ENCODE measurements at regions of chr3 and their contacts with region 1.

Region 1: GRCh38 chr3:100833483-100833882 is 124.2 kb downstream of the TFG start:
- DNase-seq: peak; percentile 78
- ATAC-seq: peak; percentile 75
- H3K4me3 ChIP-seq: no peak overlapping the region
- H3K27ac ChIP-seq: no peak overlapping the region
- H3K4me1 ChIP-seq: peaks cover 19% of the 10 kb centered on the region
- H3K27me3 ChIP-seq: peaks cover 0 to 12% of the 10 kb centered on the region in 2 experiments; a peak in 2 of 5 replicates
- CTCF ChIP-seq: no peak
- EP300 ChIP-seq: peak in 1 of 2 experiments; percentile 41; a peak in 1 of 4 replicates
- POLR2A ChIP-seq: no peak
- RAD21 ChIP-seq: no peak

Region 2: GRCh38 chr3:100695696-100696095 is 137.8 kb before region 1 on chr3:
- CTCF ChIA-PET with region 1: no interaction called
- POLR2A ChIA-PET with region 1: no interaction called
- in situ Hi-C with region 1: no loop called
- intact Hi-C with region 1: no loop called
- DNase-seq: no peak
- ATAC-seq: no peak
- H3K4me3 ChIP-seq: no peak overlapping the region
- H3K27ac ChIP-seq: no peak overlapping the region
- H3K4me1 ChIP-seq: peaks cover 43% of the 10 kb centered on the region
- H3K27me3 ChIP-seq: peaks cover 0 to 2% of the 10 kb centered on the region in 2 experiments; a peak in 1 of 5 replicates
- CTCF ChIP-seq: no peak
- EP300 ChIP-seq: no peak
- POLR2A ChIP-seq: no peak
- RAD21 ChIP-seq: no peak

Region 3: GRCh38 chr3:101676765-101677435 is 843.4 kb after region 1 on chr3 and contains the start of gene ZBTB11:
- CTCF ChIA-PET with region 1: no interaction called
- POLR2A ChIA-PET with region 1: no interaction called
- in situ Hi-C with region 1: no loop called
- intact Hi-C with region 1: loop called (anchors 2 kb)
- DNase-seq: peak; percentile 99
- ATAC-seq: peak; percentile 81
- H3K4me3 ChIP-seq: peak within 1 kb of the TSS; percentile 85 to 94 (median 92)
- H3K27ac ChIP-seq: peak within 1 kb of the TSS; percentile 91
- H3K4me1 ChIP-seq: peaks cover 47% of the 10 kb centered on the region
- H3K27me3 ChIP-seq: no peaks in the 10 kb centered on the region
- CTCF ChIP-seq: peak; percentile 71
- EP300 ChIP-seq: no peak
- POLR2A ChIP-seq: peak; percentile 48 to 78
- RAD21 ChIP-seq: no peak; the same call in 1 of the 2 replicates
- total RNA-seq, gene ZBTB11: 18.1 and 24.6 TPM in 2 replicates